ENCODE measurements at regions of chr1 and their contacts with region 1.

Region 1: DNA sequence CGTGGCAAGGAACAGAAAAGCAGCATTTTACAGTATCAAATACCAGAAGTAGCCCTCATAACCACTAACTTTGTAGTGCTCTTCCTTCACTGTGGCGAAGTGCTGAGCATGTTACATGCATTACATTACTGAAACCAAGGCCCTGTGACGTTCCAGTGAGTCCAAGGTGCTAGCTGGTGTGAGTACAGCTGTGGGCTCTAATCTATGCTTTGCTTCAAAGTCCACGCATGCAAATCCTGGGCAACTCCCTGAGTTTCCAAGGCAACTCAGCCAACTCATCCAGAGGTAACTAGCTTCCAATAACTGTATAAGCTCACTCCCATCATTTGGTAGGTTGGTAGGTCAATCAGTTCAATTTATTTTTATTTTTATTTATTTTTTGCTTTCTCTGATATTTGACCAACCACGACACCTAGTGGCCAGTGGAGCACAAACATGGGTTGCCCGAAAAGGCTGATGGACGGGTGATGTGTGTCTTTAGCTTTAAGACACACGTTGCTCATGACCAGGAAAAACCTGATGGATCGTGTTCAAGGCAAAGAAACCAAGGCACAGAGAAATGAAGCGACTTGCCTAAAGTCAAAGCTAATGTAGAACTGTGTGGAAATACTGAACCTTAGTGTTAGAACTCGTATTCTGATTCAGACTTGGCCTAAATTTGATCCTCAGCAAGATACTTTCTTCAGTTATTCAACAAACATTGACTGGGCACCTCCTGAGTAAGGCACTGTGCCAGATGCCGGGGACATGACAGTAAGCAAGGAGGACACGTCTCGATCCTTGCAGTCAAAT is 73.0 kb downstream of the GNG12 start:
- DNase-seq: peak; percentile 28 to 70 (median 40)
- H3K4me3 ChIP-seq: no peak overlapping the region
- H3K4me3 Mint-ChIP-seq: no peak overlapping the region
- H3K27ac ChIP-seq: no peak overlapping the region
- H3K27ac Mint-ChIP-seq: no peak overlapping the region
- H3K4me1 ChIP-seq: no peaks in the 10 kb centered on the region
- H3K4me1 Mint-ChIP-seq: no peaks in the 10 kb centered on the region
- H3K27me3 ChIP-seq: peaks cover 6% of the 10 kb centered on the region
- H3K27me3 Mint-ChIP-seq: peaks cover 17 to 29% of the 10 kb centered on the region in 2 donors

Region 2: GRCh38 chr1:67532452-67533216 is 227.6 kb before region 1 on chr1:
- CTCF ChIA-PET with region 1: interaction called, 29 read pairs
- POLR2A ChIA-PET with region 1: no interaction called
- DNase-seq: peak in 2 of 5 donors; percentile 7 to 20
- H3K4me3 ChIP-seq: no peak overlapping the region
- H3K4me3 Mint-ChIP-seq: no peak overlapping the region
- H3K27ac ChIP-seq: no peak overlapping the region
- H3K27ac Mint-ChIP-seq: peak overlapping the region in 1 of 8 donors; percentile 6
- H3K4me1 ChIP-seq: no peaks in the 10 kb centered on the region
- H3K4me1 Mint-ChIP-seq: peaks cover 0 to 2% (median 0%) of the 10 kb centered on the region in 3 donors
- H3K27me3 ChIP-seq: no peaks in the 10 kb centered on the region
- H3K27me3 Mint-ChIP-seq: peaks cover 3 to 12% of the 10 kb centered on the region in 2 donors

Region 3: GRCh38 chr1:67540733-67541125 is 219.5 kb before region 1 on chr1:
- CTCF ChIA-PET with region 1: interaction called, 13 read pairs
- POLR2A ChIA-PET with region 1: no interaction called
- DNase-seq: no peak
- H3K4me3 ChIP-seq: no peak overlapping the region
- H3K4me3 Mint-ChIP-seq: no peak overlapping the region
- H3K27ac ChIP-seq: no peak overlapping the region
- H3K27ac Mint-ChIP-seq: no peak overlapping the region
- H3K4me1 ChIP-seq: no peaks in the 10 kb centered on the region
- H3K4me1 Mint-ChIP-seq: no peaks in the 10 kb centered on the region
- H3K27me3 ChIP-seq: no peaks in the 10 kb centered on the region
- H3K27me3 Mint-ChIP-seq: peaks cover 0 to 2% of the 10 kb centered on the region in 2 donors

Region 4: DNA sequence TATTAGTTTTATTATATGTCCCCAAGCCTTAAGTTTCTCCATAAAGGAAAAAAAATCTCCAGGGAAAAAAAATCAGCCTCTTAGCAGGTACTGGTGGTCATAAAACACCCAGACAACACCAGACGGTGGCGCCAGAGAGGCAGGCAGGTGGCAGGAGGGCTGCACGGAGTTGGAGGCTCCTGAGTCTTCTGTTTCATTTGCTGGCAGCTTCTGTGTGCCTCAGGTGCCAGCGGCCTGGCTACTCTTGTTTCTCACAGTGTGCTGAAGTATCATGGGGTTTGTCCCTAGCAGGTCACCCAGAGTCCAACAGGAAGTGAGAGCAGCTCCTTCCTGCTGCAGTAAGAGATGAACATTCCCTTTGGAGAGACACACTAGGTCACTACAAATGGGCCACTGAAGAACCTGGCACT is 198.5 kb before region 1 on chr1:
- CTCF ChIA-PET with region 1: interaction called, 138 read pairs
- POLR2A ChIA-PET with region 1: no interaction called
- DNase-seq: peak; percentile 56 to 81 (median 66)
- H3K4me3 ChIP-seq: no peak overlapping the region
- H3K4me3 Mint-ChIP-seq: no peak overlapping the region
- H3K27ac ChIP-seq: no peak overlapping the region
- H3K27ac Mint-ChIP-seq: no peak overlapping the region
- H3K4me1 ChIP-seq: no peaks in the 10 kb centered on the region
- H3K4me1 Mint-ChIP-seq: no peaks in the 10 kb centered on the region
- H3K27me3 ChIP-seq: peaks cover 5% of the 10 kb centered on the region
- H3K27me3 Mint-ChIP-seq: peaks cover 6 to 25% of the 10 kb centered on the region in 2 donors

Region 5: GRCh38 chr1:67570473-67571143 is 189.6 kb before region 1 on chr1:
- CTCF ChIA-PET with region 1: interaction called, 12 read pairs
- POLR2A ChIA-PET with region 1: no interaction called
- DNase-seq: no peak
- H3K4me3 ChIP-seq: no peak overlapping the region
- H3K4me3 Mint-ChIP-seq: no peak overlapping the region
- H3K27ac ChIP-seq: no peak overlapping the region
- H3K27ac Mint-ChIP-seq: peak overlapping the region in 1 of 8 donors; percentile 19
- H3K4me1 ChIP-seq: no peaks in the 10 kb centered on the region
- H3K4me1 Mint-ChIP-seq: no peaks in the 10 kb centered on the region
- H3K27me3 ChIP-seq: no peaks in the 10 kb centered on the region
- H3K27me3 Mint-ChIP-seq: peaks cover 0 to 6% of the 10 kb centered on the region in 2 donors

Region 6: GRCh38 chr1:67685067-67685557 is 75.1 kb before region 1 on chr1 and contains the start of gene GADD45A:
- CTCF ChIA-PET with region 1: interaction called, 10 read pairs
- POLR2A ChIA-PET with region 1: no interaction called
- DNase-seq: peak; percentile 90 to 97 (median 96)
- H3K4me3 ChIP-seq: peak within 1 kb of the TSS; percentile 63
- H3K4me3 Mint-ChIP-seq: peak within 1 kb of the TSS; percentile 93 to 99 (median 97)
- H3K27ac ChIP-seq: peak within 1 kb of the TSS; percentile 74
- H3K27ac Mint-ChIP-seq: peak within 1 kb of the TSS; percentile 63 to 97 (median 95)
- H3K4me1 ChIP-seq: peaks cover 15% of the 10 kb centered on the region
- H3K4me1 Mint-ChIP-seq: peaks cover 15 to 30% (median 25%) of the 10 kb centered on the region in 3 donors
- H3K27me3 ChIP-seq: no peaks in the 10 kb centered on the region
- H3K27me3 Mint-ChIP-seq: no peaks in the 10 kb centered on the region
- total RNA-seq, gene GADD45A: 35.2 to 36.2 TPM

Region 7: DNA sequence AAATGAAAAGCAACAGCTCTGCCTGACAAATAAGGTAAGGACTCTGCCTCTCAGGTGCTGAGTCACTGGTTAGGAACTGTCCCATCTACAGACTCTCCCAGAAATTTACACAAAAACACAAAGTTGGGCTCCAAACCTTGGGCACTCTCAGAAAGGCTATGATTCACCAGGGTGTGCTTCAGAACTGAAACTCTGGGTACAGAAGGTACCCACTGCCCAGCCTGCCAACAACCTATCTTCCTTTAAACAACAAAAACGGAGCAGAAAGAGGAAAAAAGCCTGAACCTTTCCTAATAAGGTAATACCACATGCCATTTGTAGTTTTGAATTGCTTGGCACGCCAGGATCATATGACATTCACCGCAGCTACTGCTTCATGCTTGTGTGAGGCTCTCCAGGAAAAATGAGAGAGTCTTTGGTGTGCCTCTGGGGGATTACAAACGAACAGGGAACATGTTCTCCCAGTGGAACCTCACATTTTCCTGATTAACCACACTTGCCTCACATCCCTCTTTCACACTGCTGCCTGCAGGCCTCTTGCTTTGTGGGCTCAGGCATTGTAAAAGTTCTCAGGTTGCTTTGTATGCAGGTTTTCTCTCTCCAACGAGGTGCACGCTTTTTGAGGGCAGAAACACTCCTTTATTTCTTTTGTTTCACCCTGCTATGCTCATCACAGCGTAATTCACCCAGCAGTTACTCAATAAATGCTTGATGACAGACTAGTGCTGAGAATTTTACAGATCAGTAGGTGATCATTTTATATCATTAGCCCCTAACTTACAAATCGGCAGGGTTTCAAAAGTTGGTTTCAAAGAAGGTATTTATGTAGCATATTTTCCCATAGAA is 10.2 kb before region 1 on chr1:
- CTCF ChIA-PET with region 1: interaction called, 11 read pairs
- POLR2A ChIA-PET with region 1: no interaction called
- DNase-seq: no peak
- H3K4me3 ChIP-seq: no peak overlapping the region
- H3K4me3 Mint-ChIP-seq: no peak overlapping the region
- H3K27ac ChIP-seq: peak overlapping the region; percentile 11
- H3K27ac Mint-ChIP-seq: peak overlapping the region in 1 of 8 donors; percentile 11
- H3K4me1 ChIP-seq: no peaks in the 10 kb centered on the region
- H3K4me1 Mint-ChIP-seq: peaks cover 0 to 6% (median 0%) of the 10 kb centered on the region in 3 donors
- H3K27me3 ChIP-seq: no peaks in the 10 kb centered on the region
- H3K27me3 Mint-ChIP-seq: peaks cover 7 to 30% of the 10 kb centered on the region in 2 donors

Measured in CD8-positive, alpha-beta memory T cell (primary cell).